Kidney (tissue), 22 donors: ENCODE measurements at regions of chr10 and their contacts with region 1.

Region 1: DNA sequence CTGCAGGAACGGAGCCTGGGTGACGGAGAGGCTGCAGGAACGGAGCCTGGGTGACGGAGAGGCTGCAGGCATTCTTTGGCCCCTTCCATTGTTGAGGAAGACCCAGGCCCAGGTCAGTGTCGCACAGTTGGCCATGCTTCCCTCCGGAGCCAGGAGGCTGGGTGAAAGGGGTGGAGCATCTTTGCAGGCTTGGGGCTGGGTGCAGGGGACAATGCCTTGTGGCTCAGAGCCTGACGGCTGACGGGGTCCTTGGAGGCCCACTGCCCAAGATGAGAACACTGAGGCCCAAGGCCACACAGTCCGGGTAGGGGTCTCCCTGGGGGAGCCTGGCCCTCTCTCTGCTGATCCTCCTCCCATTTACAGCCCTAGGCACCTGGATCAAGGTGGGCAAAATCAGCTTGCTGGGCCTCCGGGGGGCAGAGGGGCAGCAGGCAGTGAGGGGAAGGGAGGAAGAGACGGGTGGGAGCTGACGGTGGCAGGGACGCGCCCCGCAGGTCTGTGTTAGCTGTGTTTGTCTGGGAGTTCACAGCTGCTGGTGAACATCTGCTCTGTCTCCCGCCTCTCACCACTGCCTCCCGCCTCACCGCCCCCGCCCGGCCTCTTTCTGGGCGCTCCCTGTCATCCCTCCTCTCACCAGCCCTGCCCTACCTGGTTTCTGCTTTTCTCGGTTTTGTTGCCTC is 30.6 kb upstream of the PCBD1 start:
- DNase-seq: peak in 4 of 5 donors; percentile 52 to 69 (median 60)
- H3K4me3 ChIP-seq: no peak overlapping the region
- H3K27ac ChIP-seq: no peak overlapping the region
- H3K4me1 ChIP-seq: no peaks in the 10 kb centered on the region
- H3K27me3 ChIP-seq: no peaks in the 10 kb centered on the region
- CTCF ChIP-seq: no peak

Region 2: GRCh38 chr10:71285180-71285545 is 366.2 kb after region 1 on chr10:
- intact Hi-C with region 1: loop called (anchors 10 kb)
- DNase-seq: peak in 4 of 5 donors; percentile 61 to 78 (median 67)
- H3K4me3 ChIP-seq: no peak overlapping the region
- H3K27ac ChIP-seq: no peak overlapping the region
- H3K4me1 ChIP-seq: peaks cover 0 to 2% (median 0%) of the 10 kb centered on the region in 3 donors
- H3K27me3 ChIP-seq: no peaks in the 10 kb centered on the region
- CTCF ChIP-seq: peak; percentile 81

Region 3: DNA sequence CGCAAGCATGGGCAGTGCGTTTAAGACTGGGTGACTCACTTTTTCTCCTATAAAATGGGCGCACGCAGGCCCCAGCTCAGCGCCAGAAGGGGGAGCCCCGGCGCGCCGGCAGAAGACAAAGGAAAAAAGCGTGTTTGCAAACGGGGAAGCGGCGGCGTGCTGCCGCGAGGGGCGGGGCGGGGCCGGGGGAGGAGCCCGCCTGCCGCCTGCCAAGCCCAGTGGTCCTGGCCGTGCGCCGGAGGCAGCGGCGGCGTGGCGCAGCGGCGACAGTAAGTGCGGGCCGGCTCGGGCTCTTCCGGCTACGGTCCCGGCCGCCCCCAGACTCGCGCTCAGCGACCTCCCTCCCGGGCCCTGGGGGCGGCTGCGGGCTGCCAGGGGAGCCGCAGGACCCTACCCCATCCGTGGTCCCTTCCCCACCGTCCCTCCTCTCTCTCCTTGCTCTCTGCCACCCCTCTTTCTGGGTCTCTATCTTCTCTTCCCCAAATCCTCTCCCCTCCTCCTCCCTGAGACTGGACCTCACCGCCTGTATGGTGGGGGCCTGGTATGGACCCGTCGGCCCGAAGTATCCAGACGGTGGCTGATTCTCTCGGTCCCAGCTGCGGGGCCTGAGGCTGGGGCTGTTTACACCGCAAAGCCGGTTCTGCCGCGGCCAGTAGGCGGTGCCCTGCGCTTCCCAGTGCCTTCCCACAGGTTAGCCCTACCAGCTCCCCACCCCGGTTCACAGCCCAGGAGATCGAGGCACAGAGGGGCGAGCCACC is 400.2 kb after region 1 on chr10 and contains the start of gene SLC29A3:
- intact Hi-C with region 1: no loop called
- DNase-seq: peak; percentile 84 to 93 (median 91)
- H3K4me3 ChIP-seq: peak within 1 kb of the TSS; percentile 58 to 75 (median 65)
- H3K27ac ChIP-seq: no peak within 1 kb of the TSS
- H3K4me1 ChIP-seq: peaks cover 0 to 9% (median 7%) of the 10 kb centered on the region in 3 donors
- H3K27me3 ChIP-seq: no peaks in the 10 kb centered on the region
- CTCF ChIP-seq: peak; percentile 51
- total RNA-seq, gene SLC29A3: 5.3 TPM